ENCODE measurements at regions of chr4 and their contacts with region 1.

Region 1: DNA sequence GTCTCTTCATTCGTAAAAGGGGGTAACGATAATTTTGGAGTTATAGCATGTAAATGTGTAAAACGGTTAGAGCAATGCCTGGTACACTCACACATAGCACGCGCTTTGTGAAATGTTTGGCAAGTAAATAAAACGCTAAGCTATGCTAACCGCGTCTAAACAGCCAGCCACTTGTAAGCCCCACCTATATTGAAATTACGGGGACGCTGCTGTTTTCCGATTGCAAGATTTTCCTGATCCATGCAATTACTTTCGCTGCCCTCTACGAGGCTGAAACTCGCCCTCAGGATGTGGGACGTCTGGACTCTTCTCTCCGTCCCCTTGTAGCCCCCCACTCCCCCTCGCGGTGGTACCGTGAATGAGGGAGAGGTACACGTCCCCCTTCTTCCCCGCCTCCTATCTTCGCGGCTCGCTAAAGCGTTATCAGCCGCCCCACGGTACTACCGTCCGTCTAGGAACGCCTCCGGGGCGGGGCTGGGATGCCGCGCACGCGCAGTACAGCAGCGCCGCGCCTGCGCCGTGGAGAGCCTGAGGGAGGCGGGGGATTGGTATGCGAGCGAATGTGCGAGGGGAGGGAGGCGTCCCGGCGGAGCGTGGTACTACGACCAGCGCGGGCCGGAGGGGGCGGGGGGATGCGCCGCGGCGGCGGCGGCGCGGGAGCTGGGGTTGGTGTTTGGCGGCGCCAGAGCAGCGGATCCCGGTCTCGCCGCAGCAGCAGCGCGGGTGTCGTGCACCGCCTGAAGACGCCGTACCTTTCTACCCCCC is at the start of gene STIM2:
- DNase-seq: peak; percentile 97
- H3K4me3 ChIP-seq: peak within 1 kb of the TSS; percentile 61 to 80 (median 77)
- H3K27ac ChIP-seq: peak within 1 kb of the TSS; percentile 64
- H3K4me1 ChIP-seq: peaks cover 28% of the 10 kb centered on the region
- H3K27me3 ChIP-seq: no peaks in the 10 kb centered on the region
- CTCF ChIP-seq: peak in 1 of 2 donors; percentile 30
- total RNA-seq, gene STIM2: 37.9 to 56.0 TPM

Region 2: DNA sequence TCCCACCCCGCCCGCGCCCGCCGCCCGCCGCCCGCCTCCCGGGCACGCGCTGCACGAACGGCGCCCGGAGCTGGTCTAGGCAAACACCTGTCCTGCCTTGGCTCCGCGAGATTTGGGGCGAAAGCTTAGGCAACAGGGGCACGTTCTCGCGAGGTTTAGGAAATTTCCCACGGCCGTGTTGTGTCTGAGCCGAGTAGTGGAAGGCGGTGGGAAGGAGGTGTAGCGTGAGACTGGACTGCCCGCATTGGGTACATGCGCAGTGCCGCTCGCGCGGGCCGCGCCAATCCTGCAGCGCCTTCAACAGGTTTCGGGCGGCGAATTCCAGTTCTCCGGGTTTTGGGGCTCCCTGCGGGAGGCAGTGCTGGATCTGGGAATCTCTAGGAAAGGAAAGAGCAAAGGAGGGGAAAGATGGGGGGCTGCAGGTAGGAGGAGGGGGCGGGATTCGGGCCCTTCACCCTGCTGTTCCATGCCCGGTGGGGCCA is 540.8 kb before region 1 on chr4:
- CTCF ChIA-PET with region 1: no interaction called
- dilution Hi-C with region 1: no loop called
- in situ Hi-C with region 1: no loop called
- intact Hi-C with region 1: loop called (anchors 10 kb)
- DNase-seq: peak; percentile 99
- H3K4me3 ChIP-seq: peak overlapping the region; percentile 68 to 90 (median 86)
- H3K27ac ChIP-seq: peak overlapping the region; percentile 79
- H3K4me1 ChIP-seq: peaks cover 15% of the 10 kb centered on the region
- H3K27me3 ChIP-seq: no peaks in the 10 kb centered on the region
- CTCF ChIP-seq: peak in 1 of 2 donors; percentile 3

Region 3: DNA sequence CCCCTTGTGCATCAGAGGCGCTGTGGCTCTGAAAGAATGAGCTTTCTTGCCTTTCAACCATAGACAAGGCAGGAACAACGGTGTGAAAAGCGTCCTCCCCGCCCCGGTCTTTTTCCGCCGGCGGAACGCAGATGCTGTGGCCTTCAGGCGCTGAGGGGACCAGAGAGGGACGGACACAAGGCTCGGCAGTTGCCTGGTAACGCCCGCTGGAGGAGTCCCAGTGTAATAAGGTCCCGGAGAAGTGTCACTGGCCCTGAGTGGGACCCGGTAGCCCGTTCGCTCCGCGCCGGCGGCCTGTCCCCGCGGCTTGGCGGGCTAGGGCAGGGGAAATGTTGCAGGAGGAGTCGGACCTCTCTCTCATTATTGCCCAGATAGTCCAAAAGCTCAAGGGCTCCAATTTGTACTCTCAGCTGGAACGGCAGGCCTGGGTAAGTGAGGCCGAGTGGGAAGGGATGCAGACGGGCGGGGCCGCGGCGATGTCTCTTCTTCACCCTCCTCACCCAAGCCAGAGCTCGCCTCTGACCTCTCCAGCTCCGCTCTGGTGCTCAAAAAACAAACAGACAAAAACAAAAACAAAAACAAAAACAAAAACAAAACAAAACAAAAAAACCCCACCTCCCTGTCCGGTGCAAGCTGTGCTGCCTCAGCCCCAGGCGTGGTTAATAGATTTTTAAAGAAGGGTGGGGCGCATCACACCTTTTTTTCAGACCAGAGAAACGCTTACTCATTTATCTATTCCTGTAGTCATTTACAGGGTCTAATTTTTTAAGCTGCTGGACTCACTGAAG is 276.3 kb before region 1 on chr4 and contains the start of gene TBC1D19:
- CTCF ChIA-PET with region 1: no interaction called
- dilution Hi-C with region 1: no loop called
- in situ Hi-C with region 1: no loop called
- intact Hi-C with region 1: loop called (anchors 5 kb)
- DNase-seq: peak; percentile 88
- H3K4me3 ChIP-seq: peak within 1 kb of the TSS; percentile 80 to 87 (median 81)
- H3K27ac ChIP-seq: peak within 1 kb of the TSS; percentile 91
- H3K4me1 ChIP-seq: peaks cover 8% of the 10 kb centered on the region
- H3K27me3 ChIP-seq: no peaks in the 10 kb centered on the region
- CTCF ChIP-seq: no peak
- total RNA-seq, gene TBC1D19: 13.6 to 34.0 TPM

Region 4: DNA sequence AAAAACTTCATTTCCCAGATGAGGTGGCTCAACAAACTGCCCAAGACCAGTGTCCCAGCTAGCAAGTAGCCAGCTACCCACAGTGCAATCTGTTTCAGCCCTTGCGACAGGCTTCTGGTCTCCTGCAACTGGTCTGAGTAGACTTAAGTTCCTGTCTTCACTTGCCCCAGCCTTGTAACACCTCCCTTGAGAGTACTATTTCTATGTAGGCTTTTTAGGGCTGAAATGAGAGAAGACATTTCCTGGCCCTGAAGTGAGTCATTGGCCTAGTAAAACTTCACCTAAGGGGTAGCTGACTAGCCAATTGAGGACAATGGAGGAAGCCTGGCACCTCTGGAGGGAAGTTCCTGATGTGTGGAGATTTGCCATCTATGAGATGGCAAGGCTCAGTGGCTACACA is 79.8 kb before region 1 on chr4:
- CTCF ChIA-PET with region 1: no interaction called
- dilution Hi-C with region 1: no loop called
- in situ Hi-C with region 1: no loop called
- intact Hi-C with region 1: loop called (anchors 1 kb)
- DNase-seq: peak; percentile 97
- H3K4me3 ChIP-seq: no peak overlapping the region
- H3K27ac ChIP-seq: peak overlapping the region; percentile 84
- H3K4me1 ChIP-seq: peaks cover 35% of the 10 kb centered on the region
- H3K27me3 ChIP-seq: no peaks in the 10 kb centered on the region
- CTCF ChIP-seq: no peak

Region 5: DNA sequence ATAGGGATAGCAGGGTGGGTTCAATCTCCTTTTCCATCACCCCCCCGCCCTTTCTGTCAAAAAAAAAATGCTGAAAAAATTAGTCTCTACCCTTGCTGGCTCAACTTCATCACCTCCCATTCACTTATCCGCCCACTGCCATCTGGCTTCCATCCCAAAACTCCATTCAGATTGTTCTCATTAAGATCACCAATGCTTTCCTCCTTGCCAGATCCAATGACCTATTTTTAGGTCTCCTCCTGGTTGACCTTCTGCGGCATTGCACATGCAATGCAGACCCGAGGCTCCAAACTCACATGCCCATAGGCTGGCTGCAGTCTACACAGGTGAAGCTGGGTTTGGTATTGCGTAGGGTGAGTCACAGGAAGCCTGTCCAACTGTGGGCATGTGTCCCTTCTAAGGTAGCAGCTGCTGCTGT is 20.8 kb before region 1 on chr4:
- CTCF ChIA-PET with region 1: no interaction called
- dilution Hi-C with region 1: no loop called
- in situ Hi-C with region 1: no loop called
- intact Hi-C with region 1: no loop called
- DNase-seq: peak; percentile 71
- H3K4me3 ChIP-seq: no peak overlapping the region
- H3K27ac ChIP-seq: no peak overlapping the region
- H3K4me1 ChIP-seq: peaks cover 7% of the 10 kb centered on the region
- H3K27me3 ChIP-seq: no peaks in the 10 kb centered on the region
- CTCF ChIP-seq: no peak

Region 6: DNA sequence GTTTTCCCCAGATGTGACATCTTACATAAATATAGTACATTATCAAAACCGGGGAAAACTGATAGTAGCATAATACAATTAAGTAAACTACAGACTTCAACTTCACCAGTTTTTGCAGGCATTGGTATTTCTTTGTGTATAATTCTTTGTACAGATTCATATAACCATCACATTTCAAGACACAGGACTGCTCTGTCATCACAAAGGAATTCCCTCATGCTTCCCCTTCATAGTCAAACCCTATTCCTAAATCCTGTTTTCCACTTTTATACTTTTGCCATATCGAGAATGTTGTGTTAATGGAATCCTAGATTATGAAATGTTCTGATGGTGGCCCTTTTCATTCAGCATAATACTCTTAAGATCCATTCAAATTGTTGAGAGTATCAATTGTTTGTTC is 36.3 kb after region 1 on chr4:
- CTCF ChIA-PET with region 1: no interaction called
- dilution Hi-C with region 1: no loop called
- in situ Hi-C with region 1: no loop called
- intact Hi-C with region 1: loop called (anchors 2 kb)
- DNase-seq: peak; percentile 42
- H3K4me3 ChIP-seq: no peak overlapping the region
- H3K27ac ChIP-seq: no peak overlapping the region
- H3K4me1 ChIP-seq: peaks cover 18% of the 10 kb centered on the region
- H3K27me3 ChIP-seq: no peaks in the 10 kb centered on the region
- CTCF ChIP-seq: no peak

Region 7: DNA sequence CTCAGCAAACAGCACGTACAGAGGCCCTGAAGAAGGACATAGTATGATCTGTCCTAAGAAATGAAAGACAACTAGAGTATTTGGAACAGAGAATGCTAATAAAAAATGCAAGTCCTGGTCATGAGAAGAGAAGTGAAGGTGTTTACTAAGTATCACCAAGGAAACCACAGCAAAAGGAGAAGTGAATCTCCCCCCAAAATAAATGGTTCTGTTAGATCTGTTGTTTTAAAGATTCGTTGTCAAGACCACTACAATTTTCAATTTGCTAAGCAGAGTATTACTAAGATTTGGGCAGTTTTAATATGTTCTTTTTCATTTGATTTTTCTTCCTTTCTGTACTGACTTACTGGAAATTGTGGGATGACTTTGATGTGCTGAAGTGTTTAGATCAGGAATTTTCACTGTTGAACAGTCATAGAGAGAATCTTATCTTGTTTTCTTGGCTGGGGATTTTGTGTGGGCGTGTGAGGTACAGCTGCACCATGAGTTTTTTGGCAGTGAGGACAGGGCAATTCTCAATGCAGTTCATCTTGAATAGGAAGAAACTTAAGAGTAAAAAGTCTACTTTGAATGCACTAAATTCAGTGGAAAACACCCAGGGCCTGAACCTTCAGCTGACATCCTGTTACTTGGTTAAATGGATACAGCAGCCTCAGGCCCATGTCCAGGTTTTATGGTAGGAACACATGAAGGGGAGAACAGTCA is 132.5 kb after region 1 on chr4:
- CTCF ChIA-PET with region 1: no interaction called
- dilution Hi-C with region 1: no loop called
- in situ Hi-C with region 1: loop called in 1 of 2 experiments (anchors 25 kb)
- intact Hi-C with region 1: no loop called
- DNase-seq: peak; percentile 54
- H3K4me3 ChIP-seq: no peak overlapping the region
- H3K27ac ChIP-seq: no peak overlapping the region
- H3K4me1 ChIP-seq: peaks cover 5% of the 10 kb centered on the region
- H3K27me3 ChIP-seq: no peaks in the 10 kb centered on the region
- CTCF ChIP-seq: no peak

Region 8: GRCh38 chr4:27010334-27010940 is 150.1 kb after region 1 on chr4:
- CTCF ChIA-PET with region 1: no interaction called
- dilution Hi-C with region 1: loop called (anchors 5 kb)
- in situ Hi-C with region 1: no loop called
- intact Hi-C with region 1: loop called (anchors 1 kb)
- DNase-seq: peak; percentile 32
- H3K4me3 ChIP-seq: no peak overlapping the region
- H3K27ac ChIP-seq: no peak overlapping the region
- H3K4me1 ChIP-seq: peaks cover 4% of the 10 kb centered on the region
- H3K27me3 ChIP-seq: no peaks in the 10 kb centered on the region
- CTCF ChIP-seq: peak; percentile 85 to 86

Region 9: GRCh38 chr4:27198971-27199370 is 338.6 kb after region 1 on chr4:
- CTCF ChIA-PET with region 1: no interaction called
- dilution Hi-C with region 1: no loop called
- in situ Hi-C with region 1: no loop called
- intact Hi-C with region 1: no loop called
- DNase-seq: no peak
- H3K4me3 ChIP-seq: no peak overlapping the region
- H3K27ac ChIP-seq: no peak overlapping the region
- H3K4me1 ChIP-seq: no peaks in the 10 kb centered on the region
- H3K27me3 ChIP-seq: no peaks in the 10 kb centered on the region
- CTCF ChIP-seq: no peak

Region 10: DNA sequence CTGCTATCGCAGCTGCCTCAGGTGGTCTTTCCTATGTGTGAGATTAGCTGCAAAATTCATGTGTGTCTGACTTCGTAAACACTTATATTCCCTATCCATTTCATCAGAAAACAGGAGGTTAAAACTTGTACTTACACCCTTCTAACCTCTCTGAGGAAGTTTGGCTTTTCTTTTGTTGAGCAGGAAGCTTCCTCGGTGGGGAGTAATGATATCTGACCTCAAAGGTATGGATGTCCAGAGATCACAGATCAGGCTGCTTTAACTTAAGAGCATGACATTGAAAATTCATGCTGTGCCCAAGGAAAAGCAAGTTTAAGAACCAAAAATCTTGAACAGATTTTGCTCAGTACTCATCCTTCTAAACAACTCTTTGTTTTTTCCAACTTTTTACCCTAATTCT is 429.4 kb after region 1 on chr4:
- CTCF ChIA-PET with region 1: no interaction called
- dilution Hi-C with region 1: no loop called
- in situ Hi-C with region 1: no loop called
- intact Hi-C with region 1: no loop called
- DNase-seq: no peak
- H3K4me3 ChIP-seq: no peak overlapping the region
- H3K27ac ChIP-seq: no peak overlapping the region
- H3K4me1 ChIP-seq: no peaks in the 10 kb centered on the region
- H3K27me3 ChIP-seq: no peaks in the 10 kb centered on the region
- CTCF ChIP-seq: no peak